ENCODE measurements at regions of chr20 and their contacts with region 1.

Region 1: GRCh38 chr20:20939006-20939405 is 167.2 kb downstream of the LINC00237 start:
- DNase-seq: no peak
- H3K4me3 ChIP-seq: no peak overlapping the region
- H3K27ac ChIP-seq: no peak overlapping the region
- H3K4me1 ChIP-seq: no peaks in the 10 kb centered on the region
- H3K27me3 ChIP-seq: peaks cover 38% of the 10 kb centered on the region
- CTCF ChIP-seq: no peak

Region 2: GRCh38 chr20:20897922-20898321 is 41.1 kb before region 1 on chr20:
- CTCF ChIA-PET with region 1: no interaction called
- POLR2A ChIA-PET with region 1: no interaction called
- intact Hi-C with region 1: loop called (anchors 1 kb)
- DNase-seq: no peak
- H3K4me3 ChIP-seq: no peak overlapping the region
- H3K27ac ChIP-seq: no peak overlapping the region
- H3K4me1 ChIP-seq: no peaks in the 10 kb centered on the region
- H3K27me3 ChIP-seq: peaks cover 6% of the 10 kb centered on the region
- CTCF ChIP-seq: no peak

Measured in A673 (cell line).